Activated CD8-positive, alpha-beta T cell treated with anti-CD3 and anti-CD28 coated beads, Interleukin-2, amount 10 ng/mL, durations not matched to agents 7 days and 5 days (primary cell): ENCODE measurements at regions of chr14 and their contacts with region 1.

Region 1: GRCh38 chr14:76956316-76957090 is 72.0 kb downstream of the IRF2BPL start:
- DNase-seq: peak; percentile 93
- ATAC-seq: peak; percentile 56
- H3K4me3 Mint-ChIP-seq: peak overlapping the region; percentile 72
- H3K27ac Mint-ChIP-seq: peak overlapping the region; percentile 92
- H3K4me1 Mint-ChIP-seq: peaks cover 83% of the 10 kb centered on the region
- H3K27me3 Mint-ChIP-seq: no peaks in the 10 kb centered on the region

Region 2: DNA sequence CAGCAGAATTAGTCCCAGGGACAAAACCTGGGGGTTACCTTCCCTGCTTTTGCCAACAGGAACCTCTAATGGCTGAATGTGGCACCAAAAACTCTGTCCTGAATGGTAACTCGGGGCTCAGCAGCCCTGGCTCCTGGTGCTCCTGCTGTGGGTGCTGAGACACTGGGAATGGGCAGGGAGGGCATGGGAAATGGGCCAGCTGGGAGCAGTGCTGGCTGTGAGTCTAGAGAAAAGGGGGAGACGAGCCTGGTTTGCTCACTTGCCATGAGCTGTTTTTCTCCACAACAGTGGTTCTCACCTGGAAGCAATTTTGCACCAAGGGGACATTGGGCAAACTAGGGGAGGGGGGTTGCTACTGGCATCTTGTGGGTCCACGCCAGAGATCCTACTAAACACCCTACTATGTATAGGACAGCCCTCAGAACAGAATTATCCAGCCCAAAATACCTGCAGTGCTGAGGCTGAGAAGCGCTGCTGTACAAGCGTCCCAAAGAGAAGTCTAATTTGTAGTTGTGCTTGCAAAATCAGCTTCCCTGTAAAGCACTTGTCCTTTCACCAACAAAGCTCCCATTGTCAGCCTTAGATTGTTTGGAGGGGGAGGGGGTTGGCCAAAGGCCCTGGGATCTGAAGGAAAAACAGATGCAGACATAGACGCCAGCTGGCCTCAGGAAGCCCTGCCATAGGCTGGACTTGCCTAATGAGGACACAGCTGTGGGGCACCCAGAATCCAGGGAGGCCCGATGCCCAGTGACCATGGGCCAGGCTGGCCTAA is 126.7 kb before region 1 on chr14:
- CTCF ChIA-PET with region 1: no interaction called
- POLR2A ChIA-PET with region 1: no interaction called
- DNase-seq: no peak
- ATAC-seq: no peak
- H3K4me3 Mint-ChIP-seq: no peak overlapping the region
- H3K27ac Mint-ChIP-seq: no peak overlapping the region
- H3K4me1 Mint-ChIP-seq: no peaks in the 10 kb centered on the region
- H3K27me3 Mint-ChIP-seq: peaks cover 11% of the 10 kb centered on the region

Region 3: DNA sequence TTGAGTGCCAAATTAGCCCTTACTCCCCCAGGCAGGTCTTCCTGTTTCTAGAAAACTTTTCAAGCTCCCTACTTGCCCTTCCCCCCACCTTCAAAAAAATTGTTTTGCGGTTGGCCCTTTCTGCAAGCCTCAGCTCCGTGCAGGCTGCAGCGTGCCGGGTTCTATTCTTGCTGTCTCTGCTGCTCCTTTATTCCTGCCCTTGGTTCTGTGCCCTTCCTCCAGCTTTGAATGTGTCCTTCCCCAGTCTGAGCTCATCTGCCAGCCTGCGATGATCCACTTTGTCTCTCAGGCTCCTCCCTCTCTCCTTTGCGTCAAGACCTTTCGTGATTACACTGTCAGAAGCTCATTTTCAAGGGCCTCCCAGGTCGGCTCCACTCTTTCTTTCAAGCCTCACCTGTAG is 26.6 kb before region 1 on chr14:
- CTCF ChIA-PET with region 1: interaction called, 12 read pairs
- POLR2A ChIA-PET with region 1: interaction called, 9 read pairs
- DNase-seq: peak; percentile 82
- ATAC-seq: peak; percentile 70
- H3K4me3 Mint-ChIP-seq: peak overlapping the region; percentile 48
- H3K27ac Mint-ChIP-seq: peak overlapping the region; percentile 82
- H3K4me1 Mint-ChIP-seq: peaks cover 79% of the 10 kb centered on the region
- H3K27me3 Mint-ChIP-seq: no peaks in the 10 kb centered on the region

Region 4: GRCh38 chr14:77028384-77029231 is 72.1 kb after region 1 on chr14 and contains the start of gene IRF2BPL:
- CTCF ChIA-PET with region 1: interaction called, 30 read pairs
- POLR2A ChIA-PET with region 1: interaction called, 63 read pairs
- DNase-seq: peak; percentile 96
- ATAC-seq: peak; percentile 76
- H3K4me3 Mint-ChIP-seq: peak within 1 kb of the TSS; percentile 94
- H3K27ac Mint-ChIP-seq: peak within 1 kb of the TSS; percentile 88
- H3K4me1 Mint-ChIP-seq: peaks cover 63% of the 10 kb centered on the region
- H3K27me3 Mint-ChIP-seq: no peaks in the 10 kb centered on the region
- total RNA-seq, gene IRF2BPL: 34.5 to 35.6 TPM

Region 5: DNA sequence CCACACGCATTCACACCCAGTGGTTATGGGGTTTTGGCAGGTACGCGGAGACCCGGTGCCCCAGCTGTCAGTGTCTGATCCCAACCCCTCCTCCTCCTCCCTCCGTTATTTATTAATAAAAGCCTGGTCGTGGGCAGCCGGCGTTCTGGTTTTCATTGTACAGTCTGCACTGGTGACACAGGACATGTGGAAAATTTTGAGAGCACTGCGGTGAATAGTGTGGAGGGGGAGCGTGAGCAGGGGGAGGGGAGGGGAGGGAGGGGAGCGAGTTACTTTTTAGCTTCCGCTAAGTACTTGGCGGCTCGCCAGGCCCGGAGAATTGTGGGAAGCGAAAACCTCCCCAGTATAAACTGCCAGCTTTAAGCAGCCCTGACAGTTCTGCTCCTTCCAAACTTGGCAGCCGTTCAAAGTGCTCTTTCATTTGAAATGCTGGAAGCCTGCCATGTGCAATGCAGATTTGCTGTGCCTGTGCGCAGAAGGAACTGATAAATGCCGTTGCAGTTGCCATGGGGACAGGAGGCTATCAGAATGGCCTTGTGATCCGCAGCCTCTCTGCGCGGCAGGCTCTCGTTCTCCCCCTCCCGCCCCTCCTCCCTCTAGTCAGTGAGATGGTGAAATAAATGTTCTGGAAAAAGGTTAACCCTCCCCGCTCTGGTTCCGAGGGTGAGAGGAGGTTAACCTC is 83.7 kb after region 1 on chr14:
- CTCF ChIA-PET with region 1: interaction called, 16 read pairs
- POLR2A ChIA-PET with region 1: interaction called, 24 read pairs
- DNase-seq: peak; percentile 94
- ATAC-seq: peak; percentile 72
- H3K4me3 Mint-ChIP-seq: peak overlapping the region; percentile 76
- H3K27ac Mint-ChIP-seq: peak overlapping the region; percentile 97
- H3K4me1 Mint-ChIP-seq: peaks cover 89% of the 10 kb centered on the region
- H3K27me3 Mint-ChIP-seq: no peaks in the 10 kb centered on the region

Region 6: DNA sequence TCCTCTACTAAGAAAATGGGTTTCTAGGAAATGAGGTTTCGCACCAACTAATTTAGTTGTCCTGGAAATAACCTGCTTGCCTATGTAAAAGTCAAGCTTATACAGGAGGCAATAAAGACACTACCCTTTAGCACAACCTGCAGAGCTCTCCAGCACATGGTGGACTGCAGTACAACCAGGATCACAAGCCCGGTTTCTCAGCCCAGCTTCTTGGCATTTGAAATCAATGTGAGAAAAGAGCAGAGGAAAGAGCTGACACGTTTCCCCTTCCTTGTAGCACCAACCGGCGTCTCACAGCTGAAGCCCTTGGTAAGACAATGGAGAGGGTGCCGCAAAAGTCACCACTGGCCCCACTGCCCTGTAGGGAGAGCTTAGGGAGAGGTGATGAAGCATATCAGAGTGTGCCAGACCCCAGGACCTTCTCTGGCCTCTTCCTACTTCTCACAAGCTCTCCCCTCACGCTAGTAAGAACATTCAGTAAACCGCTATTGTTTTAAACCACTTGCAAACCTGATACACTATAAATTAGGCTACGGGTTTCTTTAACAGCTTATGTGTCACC is 651.3 kb after region 1 on chr14:
- CTCF ChIA-PET with region 1: no interaction called
- POLR2A ChIA-PET with region 1: no interaction called
- DNase-seq: peak; percentile 49
- ATAC-seq: peak; percentile 66
- H3K4me3 Mint-ChIP-seq: peak overlapping the region; percentile 73
- H3K27ac Mint-ChIP-seq: peak overlapping the region; percentile 90
- H3K4me1 Mint-ChIP-seq: peaks cover 78% of the 10 kb centered on the region
- H3K27me3 Mint-ChIP-seq: no peaks in the 10 kb centered on the region